ENCODE measurements at regions of chr22 and their contacts with region 1.

Region 1: DNA sequence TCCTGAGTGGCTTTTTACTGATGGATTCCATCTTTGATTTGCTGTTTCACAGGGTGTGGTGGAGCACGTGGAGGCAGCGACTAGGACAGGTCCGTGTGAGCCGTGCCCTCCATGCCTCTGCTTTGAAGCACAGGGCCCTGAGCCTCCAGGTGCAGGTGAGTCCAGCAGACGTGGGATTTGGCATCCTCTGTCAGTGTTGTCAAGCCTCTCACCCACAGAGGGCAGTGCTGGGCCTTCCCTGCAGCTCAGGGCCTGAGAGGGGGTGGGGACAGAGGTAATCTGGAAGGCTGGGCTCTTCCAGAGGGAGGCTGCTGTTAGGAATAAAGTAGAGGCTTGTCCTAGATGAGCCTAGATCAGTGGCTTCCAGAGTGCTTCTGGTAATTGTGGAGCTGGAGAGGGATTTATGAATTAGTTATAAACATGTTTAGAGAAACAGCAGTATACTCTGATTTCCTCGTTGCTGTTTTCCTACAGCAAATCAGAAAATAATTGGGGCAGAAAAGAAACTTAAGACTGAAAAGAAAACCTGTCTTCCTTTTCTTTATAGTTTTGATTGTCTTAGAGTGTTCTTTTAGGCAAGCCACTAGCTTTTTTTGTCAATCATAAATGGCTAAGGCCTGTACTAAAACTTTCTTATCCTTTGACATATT is 65.0 kb downstream of the SFI1 start:
- DNase-seq: peak; percentile 68 to 77 (median 72)
- H3K4me3 ChIP-seq: no peak overlapping the region
- H3K27ac ChIP-seq: no peak overlapping the region
- H3K4me1 ChIP-seq: no peaks in the 10 kb centered on the region
- H3K27me3 ChIP-seq: no peaks in the 10 kb centered on the region
- CTCF ChIP-seq: peak in 2 of 3 donors; percentile 45 to 52
- EP300 ChIP-seq: no peak
- POLR2A ChIP-seq: no peak

Region 2: DNA sequence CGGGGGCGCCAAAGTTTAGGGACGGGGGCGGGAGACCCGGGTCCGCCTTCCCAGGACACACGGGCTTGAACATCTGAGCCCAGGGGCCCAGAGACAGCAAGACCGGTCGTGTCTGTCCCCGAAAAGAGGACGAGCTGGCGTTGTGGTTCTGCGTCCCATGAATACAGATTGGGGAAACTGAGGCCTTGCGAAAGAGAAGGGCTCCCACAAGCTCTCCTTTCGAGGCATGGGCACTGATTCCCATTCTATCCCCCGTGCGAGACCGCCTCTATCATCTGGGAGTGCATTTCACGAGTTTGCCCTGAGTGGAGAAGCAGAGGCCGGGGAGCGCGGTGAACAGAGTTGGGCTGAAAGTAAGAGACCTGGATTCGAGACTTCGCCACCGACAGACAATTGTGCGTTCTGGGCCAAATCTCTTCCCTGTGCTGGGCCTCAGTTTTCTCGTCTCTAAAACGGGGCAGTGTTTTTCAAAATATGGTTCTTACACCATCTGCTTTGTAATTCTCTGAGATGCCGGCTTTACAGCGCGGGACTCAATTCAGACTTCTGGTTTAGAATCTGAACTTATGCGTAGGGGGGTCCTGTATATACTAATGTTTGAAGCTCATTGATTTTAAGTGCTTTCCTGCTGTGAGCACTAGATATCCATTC is 400.9 kb before region 1 on chr22:
- intact Hi-C with region 1: no loop called
- DNase-seq: no peak
- H3K4me3 ChIP-seq: peak overlapping the region; percentile 93
- H3K27ac ChIP-seq: peak overlapping the region; percentile 77 to 79
- H3K4me1 ChIP-seq: peaks cover 8% of the 10 kb centered on the region
- H3K27me3 ChIP-seq: no peaks in the 10 kb centered on the region
- CTCF ChIP-seq: no peak
- EP300 ChIP-seq: no peak
- POLR2A ChIP-seq: no peak

Region 3: DNA sequence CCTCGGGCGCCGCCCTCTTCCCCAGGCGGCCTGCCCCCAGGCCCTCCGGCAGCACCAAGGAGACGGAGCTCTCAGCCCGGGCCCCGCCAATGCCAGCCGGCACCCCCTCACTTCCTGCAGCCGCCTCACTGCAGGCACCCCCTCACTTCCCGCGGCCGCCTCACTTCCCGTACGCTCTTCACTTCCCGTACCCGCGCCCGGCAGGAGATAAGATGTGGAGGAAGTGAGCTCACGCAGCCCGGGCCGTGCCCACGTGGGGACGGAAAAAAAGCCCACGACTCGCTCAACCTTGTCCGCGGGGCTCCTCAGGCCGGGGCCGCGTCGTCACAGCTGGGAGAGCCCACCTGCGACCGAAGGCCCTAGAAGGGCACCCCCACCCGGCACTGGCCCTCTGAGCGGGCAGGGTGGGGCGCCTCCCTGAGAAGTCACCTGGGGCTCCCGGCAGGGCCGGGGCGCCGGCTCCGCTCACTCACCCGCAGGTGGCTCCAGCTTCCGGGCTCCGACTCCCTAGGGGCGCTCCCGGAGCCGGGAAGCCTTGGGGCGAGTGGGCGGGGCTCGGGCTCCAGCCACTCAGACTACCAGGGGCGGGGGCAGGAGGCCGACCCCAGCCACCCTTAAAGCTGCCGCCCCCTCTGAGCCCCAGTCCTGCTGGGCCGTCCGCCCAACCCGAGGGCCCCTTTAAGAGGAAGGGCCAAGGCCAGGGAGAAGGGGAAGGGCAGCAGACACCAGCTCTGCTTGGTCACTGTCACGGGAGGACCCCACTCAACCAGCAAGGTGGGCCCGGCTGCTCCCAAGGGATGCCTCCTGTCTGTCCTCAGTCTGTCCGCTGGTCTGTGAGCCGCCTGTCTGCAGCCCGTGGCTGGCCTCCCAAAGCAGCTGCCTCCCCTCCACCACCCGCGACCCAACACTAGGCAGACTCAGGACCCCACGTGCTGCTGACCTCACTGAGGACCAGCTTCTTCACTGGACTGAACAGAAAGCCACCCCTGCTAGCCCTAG is 69.3 kb after region 1 on chr22:
- intact Hi-C with region 1: loop called (anchors 5 kb)
- DNase-seq: peak; percentile 78 to 85 (median 80)
- H3K4me3 ChIP-seq: peak overlapping the region; percentile 54
- H3K27ac ChIP-seq: peak overlapping the region; percentile 67 to 68
- H3K4me1 ChIP-seq: peaks cover 40% of the 10 kb centered on the region
- H3K27me3 ChIP-seq: no peaks in the 10 kb centered on the region
- CTCF ChIP-seq: no peak
- EP300 ChIP-seq: no peak
- POLR2A ChIP-seq: peak; percentile 43

Measured in ovary (tissue), 10 donors.